Breast epithelium (tissue), 4 donors: ENCODE measurements at regions of chr6 and their contacts with region 1.

Region 1: DNA sequence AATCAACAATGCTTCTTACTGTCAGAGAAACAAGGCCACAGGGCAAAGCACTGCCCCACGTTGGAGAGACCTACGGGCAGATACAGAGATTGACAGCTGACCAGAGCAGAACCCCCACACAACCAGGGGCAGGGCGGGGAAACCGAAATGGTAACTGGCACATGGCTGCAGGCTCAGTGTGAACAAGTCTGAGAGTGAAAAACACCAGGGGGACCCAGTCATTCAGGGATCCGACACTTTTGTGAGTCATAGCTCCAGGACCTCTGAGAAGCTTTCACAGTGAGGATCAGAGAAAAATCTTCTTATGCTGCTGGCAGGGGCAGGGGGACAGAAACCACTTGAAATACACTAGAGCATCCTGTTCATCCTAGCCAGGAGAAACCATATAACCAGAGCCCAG is 254.2 kb downstream of the C6orf118 start:
- DNase-seq: no peak
- H3K4me3 ChIP-seq: no peak overlapping the region
- H3K27ac ChIP-seq: no peak overlapping the region
- H3K4me1 ChIP-seq: no peaks in the 10 kb centered on the region
- H3K27me3 ChIP-seq: no peaks in the 10 kb centered on the region
- CTCF ChIP-seq: no peak
- POLR2A ChIP-seq: no peak

Region 2: DNA sequence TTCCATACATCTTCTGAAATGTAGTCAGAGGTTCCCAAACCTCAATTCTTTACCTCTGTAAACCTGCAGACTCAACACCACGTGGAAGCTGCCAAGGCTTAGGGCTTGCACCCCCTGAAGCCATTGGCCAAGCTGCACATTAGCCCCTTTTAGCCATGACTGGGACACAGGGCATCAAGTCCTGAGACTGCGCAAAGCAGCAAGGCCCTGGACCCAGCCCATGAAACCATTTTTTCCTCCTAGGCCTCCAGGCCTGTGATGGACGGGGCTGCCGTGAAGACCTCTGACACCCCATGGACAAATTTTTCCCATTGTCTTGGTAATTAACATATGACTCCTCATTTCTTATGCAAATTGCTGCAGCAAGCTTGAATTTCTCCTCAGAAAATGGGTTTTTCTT is 473.7 kb before region 1 on chr6:
- intact Hi-C with region 1: loop called (anchors 10 kb)
- DNase-seq: no peak
- H3K4me3 ChIP-seq: no peak overlapping the region
- H3K27ac ChIP-seq: no peak overlapping the region
- H3K4me1 ChIP-seq: no peaks in the 10 kb centered on the region
- H3K27me3 ChIP-seq: no peaks in the 10 kb centered on the region
- CTCF ChIP-seq: no peak
- POLR2A ChIP-seq: no peak